Heart left ventricle (tissue), 16 donors: ENCODE measurements at regions of chr14 and their contacts with region 1.

Region 1: DNA sequence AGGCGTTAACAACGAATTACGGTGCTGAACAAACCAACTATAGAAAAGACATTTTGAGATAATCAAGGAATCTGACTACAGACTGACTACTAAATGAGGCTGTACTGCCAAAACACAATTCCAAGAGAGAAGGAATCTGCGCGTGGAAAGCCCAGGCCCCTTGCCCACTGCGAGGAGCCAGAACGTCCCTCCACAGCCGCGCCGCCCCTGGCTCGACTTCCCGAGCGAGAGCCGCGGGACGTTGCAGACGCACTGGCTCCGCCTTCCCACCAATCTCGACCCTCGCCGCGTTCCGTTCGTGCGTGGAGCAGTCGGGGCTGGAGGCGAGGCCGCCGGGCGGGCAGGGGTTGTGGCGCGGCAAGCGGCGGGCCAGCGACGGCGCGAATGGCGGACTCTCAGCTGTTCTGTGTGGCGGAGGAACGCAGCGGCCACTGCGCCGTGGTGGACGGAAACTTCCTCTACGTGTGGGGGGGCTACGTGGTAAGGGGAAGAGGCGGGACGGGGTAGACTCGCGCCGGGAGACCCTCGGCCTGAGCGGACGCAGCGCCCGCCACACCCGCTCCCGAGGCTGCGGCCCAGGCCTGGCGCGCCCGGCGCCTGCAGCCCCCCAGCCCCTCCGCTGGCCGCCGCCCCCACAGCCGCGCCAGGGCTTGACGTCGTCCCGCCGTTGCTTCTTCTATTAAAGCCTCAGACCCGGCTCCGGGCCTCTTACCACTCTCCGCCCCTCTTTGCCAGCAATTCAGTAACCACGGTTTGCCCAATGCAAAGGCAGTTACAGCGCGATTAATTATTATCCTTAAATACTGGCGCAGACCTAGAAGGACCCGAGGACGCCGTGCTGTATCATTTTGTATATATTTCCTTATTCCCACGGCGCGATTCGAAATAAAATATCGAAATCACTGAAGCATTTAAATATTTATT is at the start of gene KLHDC1:
- DNase-seq: peak; percentile 91 to 95 (median 93)
- ATAC-seq: peak; percentile 87 to 96 (median 94)
- H3K4me3 ChIP-seq: peak within 1 kb of the TSS; percentile 55 to 96 (median 78)
- H3K27ac ChIP-seq: peak within 1 kb of the TSS; percentile 87 to 97 (median 94)
- H3K4me1 ChIP-seq: peaks cover 0 to 24% (median 11%) of the 10 kb centered on the region in 12 donors
- H3K27me3 ChIP-seq: no peaks in the 10 kb centered on the region
- CTCF ChIP-seq: no peak
- POLR2A ChIP-seq: peak in 1 of 2 donors; percentile 84
- total RNA-seq, gene KLHDC1: 3.0 to 9.8 (median 7.4) TPM

Region 2: DNA sequence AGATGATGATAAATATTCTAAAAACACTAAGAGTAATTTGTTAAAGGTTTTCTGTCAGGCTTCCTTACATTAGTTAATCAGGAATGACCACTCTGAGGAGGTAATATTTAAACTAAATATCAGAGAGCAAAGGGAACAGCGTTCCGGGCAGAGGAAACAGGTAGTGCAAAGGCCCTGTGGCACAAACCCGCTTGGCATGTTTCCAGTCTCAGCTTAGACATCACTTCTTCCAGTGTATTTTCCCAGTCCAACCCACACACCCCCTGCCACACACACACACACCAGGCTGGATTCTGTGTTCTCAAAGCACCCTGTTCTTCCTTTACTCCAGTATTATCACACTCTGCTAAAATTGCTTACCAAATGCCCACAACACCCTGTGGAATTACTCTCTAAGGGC is 353.9 kb before region 1 on chr14:
- intact Hi-C with region 1: no loop called
- DNase-seq: no peak
- ATAC-seq: no peak
- H3K4me3 ChIP-seq: no peak overlapping the region
- H3K27ac ChIP-seq: no peak overlapping the region
- H3K4me1 ChIP-seq: no peaks in the 10 kb centered on the region
- H3K27me3 ChIP-seq: no peaks in the 10 kb centered on the region
- CTCF ChIP-seq: no peak
- POLR2A ChIP-seq: no peak

Region 3: GRCh38 chr14:49641697-49642129 is 51.4 kb before region 1 on chr14:
- intact Hi-C with region 1: loop called in 5 of 10 experiments (anchors 5 kb)
- DNase-seq: peak in 1 of 5 donors; percentile 42
- ATAC-seq: peak; percentile 71 to 94 (median 83)
- H3K4me3 ChIP-seq: peak overlapping the region in 1 of 12 donors; percentile 9
- H3K27ac ChIP-seq: peak overlapping the region; percentile 4 to 79 (median 48)
- H3K4me1 ChIP-seq: peaks cover 0 to 57% (median 23%) of the 10 kb centered on the region in 12 donors
- H3K27me3 ChIP-seq: no peaks in the 10 kb centered on the region
- CTCF ChIP-seq: no peak
- POLR2A ChIP-seq: no peak

Region 4: GRCh38 chr14:49767562-49768300 is 74.7 kb after region 1 on chr14 and contains the start of gene KLHDC2:
- intact Hi-C with region 1: loop called in 3 of 10 experiments (anchors 5 to 10 kb)
- DNase-seq: peak; percentile 91 to 96 (median 93)
- ATAC-seq: peak; percentile 84 to 96 (median 93)
- H3K4me3 ChIP-seq: peak within 1 kb of the TSS; percentile 59 to 100 (median 95)
- H3K27ac ChIP-seq: peak within 1 kb of the TSS; percentile 91 to 99 (median 99)
- H3K4me1 ChIP-seq: peaks cover 0 to 37% (median 23%) of the 10 kb centered on the region in 12 donors
- H3K27me3 ChIP-seq: no peaks in the 10 kb centered on the region
- CTCF ChIP-seq: peak in 8 of 12 donors; percentile 22 to 71 (median 49)
- POLR2A ChIP-seq: peak; percentile 81 to 97
- total RNA-seq, gene KLHDC2: 68.2 to 93.6 (median 85.9) TPM

Region 5: DNA sequence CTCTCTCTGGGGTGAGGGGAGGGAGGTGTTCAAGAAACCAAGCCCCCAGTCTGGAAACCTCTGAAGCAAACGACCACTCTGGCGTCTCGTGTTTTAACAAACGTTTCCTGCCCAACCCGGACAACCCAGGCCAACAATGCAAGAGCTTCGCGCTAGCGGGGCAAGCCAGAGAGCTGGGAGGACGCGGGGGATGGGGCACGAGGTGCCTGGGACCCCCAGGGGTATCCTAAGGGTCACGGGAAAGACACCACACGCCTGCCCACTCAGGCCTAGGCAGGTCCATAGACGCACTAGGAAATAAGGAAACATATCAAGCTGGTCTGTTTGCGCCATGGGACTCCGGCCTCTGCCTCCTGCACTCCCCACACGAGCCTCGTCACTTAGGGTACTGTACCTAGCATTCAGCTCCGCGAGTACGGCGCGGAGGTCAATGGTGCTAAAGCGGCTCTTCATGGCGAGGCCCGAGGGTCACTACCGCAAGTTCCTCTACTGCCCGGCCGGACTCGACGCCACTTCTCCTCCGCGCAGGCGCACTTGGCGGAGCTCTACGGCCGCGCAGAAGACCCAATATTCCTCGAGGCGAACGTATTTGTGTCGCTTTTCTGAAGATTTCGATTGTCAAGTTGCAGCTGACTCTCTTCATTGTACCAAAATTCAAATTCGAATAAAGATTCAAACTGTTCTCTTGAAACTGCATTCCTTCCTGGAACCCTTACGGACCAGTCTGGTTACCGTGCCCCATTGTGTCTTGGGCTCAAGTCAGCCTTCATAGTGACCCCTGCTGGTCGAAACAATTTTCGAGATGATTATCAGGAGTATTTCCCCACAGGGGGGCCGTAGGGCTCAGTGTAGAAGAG is 159.5 kb after region 1 on chr14 and contains the start of gene NEMF:
- intact Hi-C with region 1: loop called in 1 of 10 experiments (anchors 5 kb)
- DNase-seq: peak; percentile 87 to 94 (median 91)
- ATAC-seq: peak; percentile 91 to 92 (median 92)
- H3K4me3 ChIP-seq: peak within 1 kb of the TSS; percentile 55 to 97 (median 79)
- H3K27ac ChIP-seq: peak within 1 kb of the TSS; percentile 9 to 98 (median 90)
- H3K4me1 ChIP-seq: peaks cover 0 to 46% (median 17%) of the 10 kb centered on the region in 12 donors
- H3K27me3 ChIP-seq: no peaks in the 10 kb centered on the region
- CTCF ChIP-seq: peak; percentile 64 to 96 (median 80)
- POLR2A ChIP-seq: peak in 1 of 2 donors; percentile 43
- total RNA-seq, gene NEMF: 26.7 to 69.7 (median 52.8) TPM